Activated CD4-positive, alpha-beta T cell treated with anti-CD3 and anti-CD28 coated beads for 36 hours (primary cell): ENCODE measurements at regions of chr12 and their contacts with region 1.

Region 1: GRCh38 chr12:49644620-49644994 is 21.2 kb downstream of the PRPF40B start:
- DNase-seq: peak; percentile 89
- ATAC-seq: peak; percentile 93
- H3K4me3 Mint-ChIP-seq: no peak overlapping the region
- H3K27ac Mint-ChIP-seq: peak overlapping the region; percentile 78
- H3K4me1 Mint-ChIP-seq: peaks cover 18% of the 10 kb centered on the region
- H3K27me3 Mint-ChIP-seq: no peaks in the 10 kb centered on the region

Region 2: DNA sequence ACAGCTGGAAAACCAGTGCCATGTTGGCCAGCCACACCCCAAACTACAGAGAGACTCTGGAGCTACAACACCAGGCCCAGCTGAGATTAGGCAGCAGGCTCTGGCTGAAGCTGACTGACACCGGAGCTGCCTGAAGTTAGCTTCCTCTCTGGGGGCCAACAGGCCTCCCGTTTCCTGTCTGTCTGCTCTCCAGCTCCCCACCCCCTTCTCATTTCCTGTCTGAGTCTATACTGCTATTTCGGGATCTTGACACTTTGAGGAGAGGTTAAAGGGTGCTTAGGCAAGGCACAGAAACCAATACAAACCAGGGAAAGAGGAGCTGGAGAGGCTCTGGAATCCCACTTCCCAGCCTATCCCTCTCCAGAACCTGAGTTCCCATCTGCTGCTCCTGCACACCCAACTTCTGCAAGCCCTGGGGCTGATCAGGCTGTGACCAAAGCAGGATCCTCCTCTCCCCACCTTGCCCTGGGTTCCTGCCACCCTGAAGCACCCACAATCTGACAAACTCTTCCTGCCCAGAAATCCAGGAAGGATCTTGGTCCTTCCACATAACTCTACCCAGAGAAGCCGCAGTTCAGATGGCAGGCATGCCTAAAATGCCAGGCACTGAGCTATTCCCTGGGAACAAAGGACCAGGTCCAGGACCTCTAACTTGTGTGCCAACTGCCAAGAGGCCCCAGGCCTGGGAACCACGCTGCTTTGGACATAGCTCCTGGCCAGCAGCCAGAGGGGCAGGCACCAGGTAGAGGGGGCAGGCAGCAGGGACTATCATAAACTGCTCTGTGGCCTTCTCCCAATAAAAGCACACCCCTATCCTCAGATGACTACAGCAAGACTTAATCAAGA is 18.6 kb after region 1 on chr12:
- CTCF ChIA-PET with region 1: interaction called, 14 read pairs
- POLR2A ChIA-PET with region 1: no interaction called
- intact Hi-C with region 1: no loop called
- DNase-seq: peak; percentile 85
- ATAC-seq: peak; percentile 78
- H3K4me3 Mint-ChIP-seq: peak overlapping the region; percentile 58
- H3K27ac Mint-ChIP-seq: peak overlapping the region; percentile 95
- H3K4me1 Mint-ChIP-seq: peaks cover 78% of the 10 kb centered on the region
- H3K27me3 Mint-ChIP-seq: no peaks in the 10 kb centered on the region

Region 3: GRCh38 chr12:49673446-49674317 is 29.1 kb after region 1 on chr12:
- CTCF ChIA-PET with region 1: interaction called, 20 read pairs
- POLR2A ChIA-PET with region 1: no interaction called
- intact Hi-C with region 1: no loop called
- DNase-seq: peak; percentile 28
- ATAC-seq: peak; percentile 34
- H3K4me3 Mint-ChIP-seq: no peak overlapping the region
- H3K27ac Mint-ChIP-seq: peak overlapping the region; percentile 93
- H3K4me1 Mint-ChIP-seq: peaks cover 82% of the 10 kb centered on the region
- H3K27me3 Mint-ChIP-seq: no peaks in the 10 kb centered on the region